GM10248 (cell line): ENCODE measurements at regions of chr10 and their contacts with region 1.

Region 1: GRCh38 chr10:35379226-35380137 is 43.2 kb downstream of the CCNY start:
- DNase-seq: peak; percentile 45
- CTCF ChIP-seq: peak; percentile 50

Region 2: GRCh38 chr10:35359056-35359455 is 20.4 kb before region 1 on chr10:
- CTCF ChIA-PET with region 1: interaction called, 10 read pairs
- POLR2A ChIA-PET with region 1: no interaction called
- DNase-seq: no peak
- CTCF ChIP-seq: no peak

Region 3: DNA sequence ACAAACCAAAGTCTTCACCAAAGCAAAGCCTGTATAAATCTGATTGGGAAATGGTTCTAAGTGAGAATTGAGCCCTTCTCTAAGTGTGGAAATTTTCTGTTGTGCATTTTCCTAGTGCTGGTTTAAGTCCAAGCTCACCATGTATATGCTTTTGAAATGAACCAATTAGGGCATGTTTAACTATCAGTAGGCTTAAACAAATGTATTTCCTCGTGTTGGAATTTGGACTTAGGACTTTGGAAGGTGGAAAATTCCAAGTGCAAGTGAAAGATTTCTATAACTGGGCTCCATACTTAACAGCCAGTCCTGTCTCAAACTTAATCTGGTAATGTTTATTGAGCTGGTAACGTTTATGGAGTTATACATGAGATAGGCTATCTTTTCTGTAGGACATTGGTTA is 14.7 kb before region 1 on chr10:
- CTCF ChIA-PET with region 1: interaction called, 10 read pairs
- POLR2A ChIA-PET with region 1: no interaction called
- DNase-seq: no peak
- CTCF ChIP-seq: no peak